GM10248 (cell line): ENCODE measurements at regions of chr1 and their contacts with region 1.

Region 1: DNA sequence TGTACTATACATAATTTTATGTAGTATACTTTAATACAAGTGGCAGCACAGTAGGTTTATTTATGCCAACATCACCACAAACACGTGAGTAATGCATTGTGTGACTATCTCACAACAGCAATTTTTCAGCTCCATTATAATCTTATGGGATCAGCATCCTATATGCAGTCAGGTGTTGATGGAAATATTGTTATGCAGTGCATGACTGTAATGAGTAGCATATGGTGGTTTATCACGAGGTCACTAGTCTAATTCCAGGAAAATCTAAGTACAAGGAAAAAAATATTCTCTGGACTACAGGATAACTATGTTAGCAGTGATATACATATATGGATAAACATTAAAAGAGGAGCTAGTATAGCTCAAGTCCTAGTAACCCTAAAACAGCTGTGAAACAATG is 69.0 kb downstream of the ATP1B1 start:
- DNase-seq: no peak
- CTCF ChIP-seq: no peak

Region 2: GRCh38 chr1:169129109-169129789 is 46.2 kb before region 1 on chr1:
- CTCF ChIA-PET with region 1: no interaction called
- POLR2A ChIA-PET with region 1: no interaction called
- DNase-seq: no peak
- CTCF ChIP-seq: no peak

Region 3: DNA sequence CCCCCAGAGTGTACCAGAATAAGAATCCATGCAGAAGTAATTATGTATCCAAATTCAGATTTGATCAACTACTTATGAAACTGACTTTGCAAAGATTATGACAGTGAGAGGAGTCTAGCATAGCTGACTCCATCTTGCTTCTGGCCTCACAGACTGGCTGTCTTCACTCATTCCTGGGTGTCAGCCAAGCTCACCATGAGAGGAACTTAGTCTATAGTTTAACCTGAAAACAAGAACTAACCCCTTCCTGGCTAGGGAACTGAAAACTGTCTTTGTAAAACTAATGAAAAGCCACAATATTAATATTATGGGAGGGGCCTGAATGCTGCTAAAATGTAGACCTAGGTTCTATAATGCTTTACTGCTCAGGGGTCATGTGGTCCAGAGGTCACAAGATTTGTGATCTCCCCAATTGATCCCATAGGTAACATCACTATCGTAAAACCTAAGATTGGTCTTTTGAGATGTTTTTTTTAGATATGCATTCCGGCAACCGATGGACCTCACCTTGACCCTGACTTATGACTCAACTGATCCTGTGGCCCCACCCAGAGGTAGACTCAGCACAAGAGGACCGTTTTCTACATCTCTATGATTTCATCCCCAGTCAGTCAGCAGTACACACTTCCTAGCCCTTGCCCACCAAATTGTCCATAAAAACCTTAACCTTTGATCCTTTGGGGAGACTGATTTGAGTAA is 13.8 kb before region 1 on chr1:
- CTCF ChIA-PET with region 1: interaction called, 14 read pairs
- POLR2A ChIA-PET with region 1: no interaction called
- DNase-seq: no peak
- CTCF ChIP-seq: no peak